GM10248 (cell line): ENCODE measurements at regions of chr22 and their contacts with region 1.

Region 1: DNA sequence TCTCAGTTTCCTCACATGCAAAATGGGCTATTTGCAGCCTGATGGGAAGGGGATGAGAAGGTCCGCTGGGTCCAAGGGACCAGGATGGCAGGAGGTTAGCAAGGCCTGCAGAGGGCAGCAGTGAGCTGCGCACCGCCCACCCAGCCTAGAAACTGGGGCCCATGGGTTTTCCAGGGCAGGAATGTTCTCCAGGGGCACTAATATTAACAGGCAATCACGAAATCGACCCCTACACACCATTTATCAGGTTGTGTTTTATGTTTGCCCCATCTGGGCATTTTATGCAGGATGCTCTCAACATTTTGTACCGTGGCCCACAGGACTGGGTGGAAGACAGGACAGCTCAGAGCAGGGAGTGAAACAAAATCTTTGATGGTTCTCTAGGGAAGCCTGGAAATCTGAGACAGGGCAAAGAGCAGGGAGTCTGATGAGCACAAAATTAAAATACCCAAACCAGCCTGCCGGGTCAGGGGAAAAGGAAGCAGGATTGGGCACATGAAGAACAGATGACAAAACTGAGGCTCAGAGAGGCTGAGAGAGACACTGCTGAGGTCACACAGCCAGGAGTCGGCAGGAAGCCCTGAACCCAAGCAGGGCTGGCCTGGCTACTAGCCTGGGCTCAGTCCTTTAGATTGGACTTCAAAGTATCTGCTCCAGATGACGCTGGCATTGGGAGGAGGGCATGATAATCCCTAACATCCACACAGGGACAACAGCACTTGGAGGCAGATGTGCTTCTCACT is 1.6 kb upstream of the BCR start:
- DNase-seq: peak; percentile 79
- CTCF ChIP-seq: peak; percentile 92

Region 2: GRCh38 chr22:23289851-23290724 is 111.4 kb after region 1 on chr22:
- CTCF ChIA-PET with region 1: interaction called, 229 read pairs
- POLR2A ChIA-PET with region 1: no interaction called
- DNase-seq: peak; percentile 81
- CTCF ChIP-seq: peak; percentile 57